Activated CD4-positive, alpha-beta T cell treated with anti-CD3 and anti-CD28 coated beads, Interleukin-2, amount 10 ng/mL, durations not matched to agents 24 days and 14 days (primary cell): ENCODE measurements at regions of chr1 and their contacts with region 1.

Region 1: DNA sequence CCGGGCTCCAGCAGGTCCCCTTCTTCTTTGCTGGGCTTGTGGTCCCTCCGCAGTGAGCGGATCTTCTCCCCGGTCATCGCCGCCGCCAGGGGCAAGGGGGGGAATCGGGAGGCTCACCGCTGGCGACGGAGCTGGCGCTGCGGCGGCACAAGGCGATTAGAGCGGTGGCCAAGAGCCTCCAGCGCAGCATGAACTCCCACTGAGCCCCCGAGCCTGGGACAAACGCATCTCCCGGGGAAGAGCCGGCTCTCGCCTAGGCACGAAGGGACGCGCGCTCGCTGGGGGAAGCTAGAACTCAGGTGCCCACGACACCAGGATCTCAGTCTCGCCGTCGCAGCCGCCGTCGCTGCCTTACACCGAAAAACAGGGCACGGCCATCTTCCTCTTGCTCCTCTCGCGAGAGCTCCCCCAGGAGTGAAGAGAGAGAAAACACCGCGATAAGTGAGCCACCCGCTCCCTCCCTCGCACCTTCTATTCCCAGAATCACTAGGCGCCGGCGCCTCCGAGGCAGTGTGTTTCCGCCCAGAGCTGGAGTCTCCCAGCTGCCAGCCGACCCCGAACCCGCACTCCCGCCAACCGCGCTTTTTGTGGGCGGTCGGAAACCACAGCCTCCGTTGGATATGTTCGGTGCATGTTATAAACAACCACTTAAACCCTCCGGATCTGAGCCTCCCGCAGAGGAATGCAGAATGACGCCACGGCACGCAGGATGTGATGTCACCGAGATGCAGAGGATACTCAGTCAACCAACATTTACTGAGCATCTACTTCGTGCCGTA is at the start of gene ANKRD13C:
- DNase-seq: peak; percentile 97
- H3K4me3 Mint-ChIP-seq: peak within 1 kb of the TSS; percentile 95
- H3K27ac Mint-ChIP-seq: peak within 1 kb of the TSS; percentile 97
- H3K4me1 Mint-ChIP-seq: peaks cover 25% of the 10 kb centered on the region
- H3K27me3 Mint-ChIP-seq: no peaks in the 10 kb centered on the region
- total RNA-seq, gene ANKRD13C: 22.2 and 24.6 TPM in 2 replicates

Region 2: GRCh38 chr1:70205434-70206118 is 148.9 kb before region 1 on chr1 and contains the start of gene LRRC40:
- intact Hi-C with region 1: loop called (anchors 1 kb)
- DNase-seq: peak; percentile 99
- H3K4me3 Mint-ChIP-seq: peak within 1 kb of the TSS; percentile 95
- H3K27ac Mint-ChIP-seq: peak within 1 kb of the TSS; percentile 99
- H3K4me1 Mint-ChIP-seq: peaks cover 49% of the 10 kb centered on the region
- H3K27me3 Mint-ChIP-seq: no peaks in the 10 kb centered on the region
- total RNA-seq, gene LRRC40: 23.3 and 25.3 TPM in 2 replicates

Region 3: GRCh38 chr1:70221241-70222121 is 133.0 kb before region 1 on chr1 and contains the start of gene SRSF11:
- intact Hi-C with region 1: loop called (anchors 1 kb)
- DNase-seq: peak; percentile 99
- H3K4me3 Mint-ChIP-seq: peak within 1 kb of the TSS; percentile 96
- H3K27ac Mint-ChIP-seq: peak within 1 kb of the TSS; percentile 99
- H3K4me1 Mint-ChIP-seq: peaks cover 33% of the 10 kb centered on the region
- H3K27me3 Mint-ChIP-seq: no peaks in the 10 kb centered on the region
- total RNA-seq, gene SRSF11: 187 and 195 TPM in 2 replicates

Region 4: DNA sequence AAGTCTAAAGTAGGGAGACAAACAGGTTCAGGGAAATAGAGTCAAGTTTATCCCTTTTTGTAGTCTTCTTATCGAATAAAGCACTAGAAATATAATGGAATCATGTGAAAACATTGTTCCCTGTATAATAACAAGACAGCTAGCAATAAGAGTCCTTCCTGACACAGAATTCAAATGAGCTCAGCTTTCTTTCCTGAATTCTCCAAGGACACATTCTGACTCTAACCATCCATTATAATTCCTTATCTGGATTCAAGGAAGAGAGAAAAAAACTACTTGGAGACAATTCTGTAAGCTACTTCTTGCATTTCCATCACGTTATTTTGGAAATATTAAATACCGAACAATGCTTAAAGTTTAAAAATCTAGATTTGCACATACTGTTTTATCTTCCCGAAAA is 58.8 kb before region 1 on chr1:
- intact Hi-C with region 1: loop called (anchors 5 kb)
- DNase-seq: no peak
- H3K4me3 Mint-ChIP-seq: no peak overlapping the region
- H3K27ac Mint-ChIP-seq: no peak overlapping the region
- H3K4me1 Mint-ChIP-seq: peaks cover 3% of the 10 kb centered on the region
- H3K27me3 Mint-ChIP-seq: no peaks in the 10 kb centered on the region

Region 5: GRCh38 chr1:70319750-70320149 is 34.8 kb before region 1 on chr1:
- intact Hi-C with region 1: loop called (anchors 5 kb)
- DNase-seq: no peak
- H3K4me3 Mint-ChIP-seq: no peak overlapping the region
- H3K27ac Mint-ChIP-seq: no peak overlapping the region
- H3K4me1 Mint-ChIP-seq: peaks cover 2% of the 10 kb centered on the region
- H3K27me3 Mint-ChIP-seq: no peaks in the 10 kb centered on the region

Region 6: GRCh38 chr1:70372426-70372825 is 17.9 kb after region 1 on chr1:
- intact Hi-C with region 1: no loop called
- DNase-seq: no peak
- H3K4me3 Mint-ChIP-seq: no peak overlapping the region
- H3K27ac Mint-ChIP-seq: no peak overlapping the region
- H3K4me1 Mint-ChIP-seq: no peaks in the 10 kb centered on the region
- H3K27me3 Mint-ChIP-seq: no peaks in the 10 kb centered on the region

Region 7: DNA sequence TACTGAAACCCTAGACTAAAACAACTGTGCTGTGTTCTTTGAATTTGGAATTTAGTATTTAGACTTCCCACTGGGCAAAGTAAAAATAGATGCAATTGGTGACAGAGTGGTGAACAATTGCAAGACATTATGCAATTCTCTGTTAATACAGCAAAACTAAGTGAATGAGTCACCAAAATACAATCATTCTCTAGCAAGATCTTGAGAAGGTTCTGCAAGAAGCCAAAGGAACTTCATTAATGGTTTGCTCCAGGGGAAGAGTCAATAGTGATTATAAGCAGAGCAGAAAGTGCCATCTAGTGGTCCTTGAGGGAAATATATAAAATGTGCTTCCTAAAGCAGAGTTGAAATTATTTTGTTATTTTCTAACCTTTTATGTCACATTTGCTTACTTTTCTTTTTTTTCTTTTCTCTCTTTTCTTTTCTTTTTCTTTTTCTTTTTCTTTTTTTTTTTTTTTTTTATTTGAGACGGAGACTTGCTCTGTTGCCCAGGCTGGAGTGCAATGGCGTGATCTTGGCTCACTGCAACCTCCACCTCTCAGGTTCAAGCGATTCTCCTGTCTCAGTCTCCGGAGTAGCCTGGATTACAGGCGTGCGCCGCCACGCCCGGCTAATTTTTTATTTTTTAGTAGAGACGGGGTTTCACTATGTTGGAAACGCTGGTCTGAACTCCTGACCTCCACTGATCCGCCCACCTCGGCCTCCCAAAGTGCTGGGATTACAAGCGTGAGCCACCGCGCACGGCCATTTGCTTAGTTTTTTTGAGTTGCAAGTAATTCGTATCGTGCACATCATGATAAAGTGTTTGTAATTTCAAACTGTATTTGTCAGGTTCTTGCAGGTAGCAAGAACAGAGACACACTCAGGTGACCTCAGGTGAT is 155.7 kb after region 1 on chr1:
- intact Hi-C with region 1: loop called (anchors 10 kb)
- DNase-seq: no peak
- H3K4me3 Mint-ChIP-seq: no peak overlapping the region
- H3K27ac Mint-ChIP-seq: no peak overlapping the region
- H3K4me1 Mint-ChIP-seq: no peaks in the 10 kb centered on the region
- H3K27me3 Mint-ChIP-seq: peaks cover 11% of the 10 kb centered on the region

Region 8: DNA sequence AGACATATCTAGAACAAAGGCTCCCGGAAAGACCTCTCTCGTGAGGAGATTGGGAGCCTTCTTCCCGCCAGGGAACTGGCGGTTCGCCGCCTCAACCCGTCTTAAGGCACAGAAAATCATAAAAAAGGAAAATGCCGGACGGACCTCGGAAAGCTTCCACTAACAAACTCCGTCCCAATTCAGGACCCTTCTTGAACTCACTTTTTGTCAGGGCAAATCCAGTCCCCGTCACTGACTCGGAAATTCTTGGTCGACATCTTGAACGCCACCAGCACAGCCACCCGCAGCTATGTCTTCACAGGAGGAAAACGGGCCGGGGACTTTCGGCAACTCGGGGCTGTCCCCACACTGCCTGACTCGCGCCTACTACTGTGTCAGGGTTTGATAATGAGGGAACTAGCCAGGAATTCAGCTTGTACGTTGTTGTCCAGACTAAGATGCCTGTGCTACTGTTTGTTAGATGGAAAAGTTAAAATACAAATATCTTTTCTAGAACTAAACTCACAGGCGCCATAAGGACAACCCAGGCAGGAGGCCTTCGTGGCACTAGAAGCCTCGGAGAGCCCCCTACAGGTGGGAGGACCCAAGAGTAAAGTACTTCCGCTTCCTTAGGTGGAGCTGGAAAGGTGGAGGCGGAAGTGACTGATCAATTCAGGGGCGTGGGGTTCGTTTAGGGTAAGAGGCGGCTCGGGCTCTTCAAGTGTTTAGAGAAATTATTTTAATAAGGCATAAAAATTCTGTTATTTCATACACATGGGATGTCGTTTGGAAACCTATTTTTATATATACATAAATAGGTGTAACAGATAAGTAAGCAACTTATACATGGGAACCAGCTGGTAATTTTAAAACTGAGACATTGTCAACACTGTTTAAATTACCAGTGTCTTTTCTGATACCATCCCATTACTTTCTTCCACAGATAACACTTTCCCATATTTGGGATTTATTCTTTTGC is 726.5 kb after region 1 on chr1 and contains the start of gene ZRANB2:
- intact Hi-C with region 1: loop called (anchors 1 kb)
- DNase-seq: peak; percentile 97
- H3K4me3 Mint-ChIP-seq: peak within 1 kb of the TSS; percentile 100
- H3K27ac Mint-ChIP-seq: peak within 1 kb of the TSS; percentile 99
- H3K4me1 Mint-ChIP-seq: peaks cover 13% of the 10 kb centered on the region
- H3K27me3 Mint-ChIP-seq: peaks cover 14% of the 10 kb centered on the region
- total RNA-seq, gene ZRANB2: 150 and 154 TPM in 2 replicates